HepG2 (cell line): ENCODE measurements at regions of chr1 and their contacts with region 1.

Region 1: GRCh38 chr1:7680207-7680954 is 90.7 kb upstream of the VAMP3 start:
- DNase-seq: no peak
- ATAC-seq: peak; percentile 52
- H3K4me3 ChIP-seq: peak overlapping the region; percentile 58 to 69 (median 69)
- H3K27ac ChIP-seq: peak overlapping the region; percentile 81
- H3K4me1 ChIP-seq: peaks cover 72% of the 10 kb centered on the region
- H3K27me3 ChIP-seq: peaks cover 3 to 15% of the 10 kb centered on the region in 2 experiments; a peak in 4 of 5 replicates
- CTCF ChIP-seq: no peak
- EP300 ChIP-seq: no peak
- POLR2A ChIP-seq: peak; percentile 38 to 56; a peak in 2 of 4 replicates
- RAD21 ChIP-seq: peak; percentile 16; the same call in 1 of the 2 replicates

Region 2: GRCh38 chr1:7690496-7691182 is 10.3 kb after region 1 on chr1:
- CTCF ChIA-PET with region 1: no interaction called
- POLR2A ChIA-PET with region 1: interaction called, 22 read pairs
- in situ Hi-C with region 1: no loop called
- intact Hi-C with region 1: loop called (anchors 1 kb)
- DNase-seq: no peak
- ATAC-seq: no peak
- H3K4me3 ChIP-seq: no peak overlapping the region
- H3K27ac ChIP-seq: no peak overlapping the region
- H3K4me1 ChIP-seq: peaks cover 58% of the 10 kb centered on the region
- H3K27me3 ChIP-seq: peaks cover 0 to 24% of the 10 kb centered on the region in 2 experiments; a peak in 4 of 5 replicates
- CTCF ChIP-seq: no peak
- EP300 ChIP-seq: no peak
- POLR2A ChIP-seq: no peak
- RAD21 ChIP-seq: no peak

Region 3: DNA sequence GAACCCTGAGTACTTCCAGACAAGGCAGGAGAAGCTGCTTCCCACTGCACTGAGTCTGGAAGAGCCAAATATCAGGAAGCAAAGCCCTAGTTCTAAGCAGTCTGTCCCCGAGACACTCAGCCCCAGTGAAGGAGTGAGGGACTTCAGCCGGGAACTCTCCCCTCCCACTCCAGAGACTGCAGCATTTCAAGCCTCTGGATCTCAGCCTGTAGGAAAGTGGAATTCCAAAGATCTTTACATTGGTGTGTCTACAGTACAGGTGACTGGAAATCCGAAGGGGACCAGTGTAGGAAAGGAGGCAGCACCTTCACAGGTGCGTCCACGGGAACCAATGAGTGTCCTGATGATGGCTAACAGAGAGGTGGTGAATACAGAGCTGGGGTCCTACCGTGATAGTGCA is 57.7 kb after region 1 on chr1:
- CTCF ChIA-PET with region 1: no interaction called
- POLR2A ChIA-PET with region 1: no interaction called
- in situ Hi-C with region 1: no loop called
- intact Hi-C with region 1: no loop called
- DNase-seq: no peak
- ATAC-seq: no peak
- H3K4me3 ChIP-seq: no peak overlapping the region
- H3K27ac ChIP-seq: no peak overlapping the region
- H3K4me1 ChIP-seq: no peaks in the 10 kb centered on the region
- H3K27me3 ChIP-seq: no peaks in the 10 kb centered on the region
- CTCF ChIP-seq: no peak
- EP300 ChIP-seq: no peak
- POLR2A ChIP-seq: no peak
- RAD21 ChIP-seq: no peak

Region 4: DNA sequence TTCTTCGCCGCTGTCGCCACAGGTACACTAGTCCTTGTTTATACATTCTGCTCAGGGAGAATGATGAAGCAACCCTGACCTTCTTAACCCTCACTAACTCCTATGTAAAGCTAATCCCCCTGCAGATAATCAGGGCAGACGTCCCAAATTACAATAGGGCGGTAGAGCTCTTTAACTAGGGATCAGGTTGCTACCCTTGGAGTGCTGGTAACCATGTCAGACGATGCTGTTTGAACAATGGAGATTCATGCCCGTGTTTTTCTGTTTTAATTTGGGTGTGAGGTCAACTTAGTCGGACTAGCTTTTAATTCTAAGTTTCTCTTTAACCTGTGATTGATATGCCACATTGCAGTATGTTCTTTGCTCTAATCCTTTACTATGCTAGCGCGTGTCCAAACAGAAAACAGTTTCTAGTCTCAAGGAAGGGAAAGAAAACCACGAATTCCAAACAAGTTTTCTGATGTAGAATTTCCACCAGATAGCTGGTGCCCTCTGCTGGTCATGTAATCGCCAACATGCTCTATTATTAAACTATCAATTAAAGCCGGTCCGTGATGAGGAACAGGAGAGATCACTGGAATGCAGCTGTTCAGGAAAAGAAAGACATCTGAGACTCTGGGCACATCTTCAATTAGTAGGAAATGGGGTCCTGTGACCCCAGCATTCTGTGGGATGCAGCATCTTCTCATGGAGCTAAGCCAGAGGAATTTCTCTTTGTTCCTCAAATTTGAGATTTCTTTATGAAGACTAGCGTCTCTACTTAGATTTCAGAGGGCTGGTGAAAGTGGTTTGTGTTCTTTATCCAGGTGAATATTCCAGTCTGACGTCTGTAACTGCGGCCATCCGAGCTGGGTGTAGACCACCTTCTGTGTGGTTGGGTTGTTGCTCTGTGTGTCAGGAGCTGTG is 72.4 kb after region 1 on chr1:
- CTCF ChIA-PET with region 1: no interaction called
- POLR2A ChIA-PET with region 1: interaction called, 11 read pairs
- in situ Hi-C with region 1: no loop called
- intact Hi-C with region 1: no loop called
- DNase-seq: peak; percentile 69
- ATAC-seq: peak; percentile 66
- H3K4me3 ChIP-seq: peak overlapping the region in 1 of 3 experiments; percentile 5; a peak in 1 of 6 replicates
- H3K27ac ChIP-seq: no peak overlapping the region
- H3K4me1 ChIP-seq: peaks cover 34% of the 10 kb centered on the region
- H3K27me3 ChIP-seq: no peaks in the 10 kb centered on the region
- CTCF ChIP-seq: peak; percentile 77
- EP300 ChIP-seq: 0 out of 4 replicates have a peak, but pooled peaks of 1 of the 2 experiments have one; percentile 29
- POLR2A ChIP-seq: no peak
- RAD21 ChIP-seq: peak; percentile 67